ENCODE measurements at regions of chrX and their contacts with region 1.

Region 1: DNA sequence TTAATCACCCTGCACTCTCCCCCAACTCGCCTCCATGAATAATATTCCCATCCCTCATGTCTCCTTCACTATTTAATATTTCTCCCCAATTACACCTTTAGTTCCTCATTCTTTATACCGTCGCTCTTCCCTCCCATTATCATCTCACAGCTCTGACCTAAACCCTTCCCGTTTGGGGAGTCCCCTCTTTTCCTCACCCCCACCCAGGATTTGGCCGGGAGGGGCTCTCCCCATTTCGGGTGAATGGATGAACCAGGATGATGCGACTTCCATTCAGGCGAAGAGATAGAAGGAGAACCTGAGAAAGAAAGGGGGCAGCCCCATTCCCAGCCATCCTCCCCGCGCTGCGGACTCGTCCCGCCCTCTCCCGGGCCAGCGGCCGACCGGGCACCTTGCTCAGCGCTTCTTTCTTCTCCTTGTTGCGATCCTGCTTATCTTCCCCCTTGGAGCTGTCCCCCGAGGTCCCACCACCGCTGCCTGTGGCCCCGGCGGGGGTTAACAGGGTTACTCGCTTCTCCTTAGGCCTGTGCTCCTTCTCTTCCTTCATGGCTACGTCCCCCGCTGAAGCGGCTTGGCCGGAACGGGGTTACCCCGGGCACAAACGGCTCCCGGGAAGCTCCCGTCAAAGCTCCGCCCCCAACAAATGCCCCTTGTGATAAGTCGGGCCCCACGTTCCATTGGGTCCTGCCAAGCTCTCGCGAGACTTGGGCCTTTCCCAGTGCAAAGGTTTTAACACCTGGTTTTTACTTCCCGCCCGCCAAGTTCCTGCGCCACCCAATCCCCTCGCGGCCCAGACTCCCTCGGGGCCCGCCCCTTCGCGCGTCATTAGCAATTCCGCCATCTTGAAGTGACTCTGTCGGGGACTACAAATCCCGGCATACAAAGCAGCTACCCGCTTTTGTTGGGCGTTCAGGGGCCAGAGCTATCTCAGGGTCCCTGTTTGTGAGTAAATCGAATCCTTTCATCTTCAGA is at the start of gene UPF3B:
- DNase-seq: peak; percentile 94 to 97 (median 96)
- ATAC-seq: peak; percentile 98 to 99 (median 99)
- H3K4me3 ChIP-seq: peak within 1 kb of the TSS; percentile 15 to 93 (median 74)
- H3K27ac ChIP-seq: peak within 1 kb of the TSS; percentile 68 to 93 (median 86)
- H3K4me1 ChIP-seq: peaks cover 0 to 6% (median 0%) of the 10 kb centered on the region in 12 donors
- H3K27me3 ChIP-seq: peaks cover 0 to 7% (median 0%) of the 10 kb centered on the region in 9 donors
- CTCF ChIP-seq: peak in 1 of 12 donors; percentile 6
- POLR2A ChIP-seq: peak in 1 of 2 donors; percentile 55
- total RNA-seq, gene UPF3B: 0.71 to 4.3 (median 2.8) TPM

Region 2: GRCh38 chrX:118325453-118325852 is 1527.2 kb before region 1 on chrX:
- intact Hi-C with region 1: no loop called
- DNase-seq: no peak
- ATAC-seq: no peak
- H3K4me3 ChIP-seq: no peak overlapping the region
- H3K27ac ChIP-seq: no peak overlapping the region
- H3K4me1 ChIP-seq: no peaks in the 10 kb centered on the region
- H3K27me3 ChIP-seq: peaks cover 0 to 5% (median 0%) of the 10 kb centered on the region in 9 donors
- CTCF ChIP-seq: peak in 3 of 12 donors; percentile 15 to 27 (median 17)
- POLR2A ChIP-seq: no peak

Region 3: GRCh38 chrX:118855681-118856310 is 996.9 kb before region 1 on chrX:
- intact Hi-C with region 1: loop called in 1 of 10 experiments (anchors 5 kb)
- DNase-seq: no peak
- ATAC-seq: no peak
- H3K4me3 ChIP-seq: no peak overlapping the region
- H3K27ac ChIP-seq: no peak overlapping the region
- H3K4me1 ChIP-seq: no peaks in the 10 kb centered on the region
- H3K27me3 ChIP-seq: peaks cover 0 to 5% (median 0%) of the 10 kb centered on the region in 9 donors
- CTCF ChIP-seq: no peak
- POLR2A ChIP-seq: no peak

Region 4: DNA sequence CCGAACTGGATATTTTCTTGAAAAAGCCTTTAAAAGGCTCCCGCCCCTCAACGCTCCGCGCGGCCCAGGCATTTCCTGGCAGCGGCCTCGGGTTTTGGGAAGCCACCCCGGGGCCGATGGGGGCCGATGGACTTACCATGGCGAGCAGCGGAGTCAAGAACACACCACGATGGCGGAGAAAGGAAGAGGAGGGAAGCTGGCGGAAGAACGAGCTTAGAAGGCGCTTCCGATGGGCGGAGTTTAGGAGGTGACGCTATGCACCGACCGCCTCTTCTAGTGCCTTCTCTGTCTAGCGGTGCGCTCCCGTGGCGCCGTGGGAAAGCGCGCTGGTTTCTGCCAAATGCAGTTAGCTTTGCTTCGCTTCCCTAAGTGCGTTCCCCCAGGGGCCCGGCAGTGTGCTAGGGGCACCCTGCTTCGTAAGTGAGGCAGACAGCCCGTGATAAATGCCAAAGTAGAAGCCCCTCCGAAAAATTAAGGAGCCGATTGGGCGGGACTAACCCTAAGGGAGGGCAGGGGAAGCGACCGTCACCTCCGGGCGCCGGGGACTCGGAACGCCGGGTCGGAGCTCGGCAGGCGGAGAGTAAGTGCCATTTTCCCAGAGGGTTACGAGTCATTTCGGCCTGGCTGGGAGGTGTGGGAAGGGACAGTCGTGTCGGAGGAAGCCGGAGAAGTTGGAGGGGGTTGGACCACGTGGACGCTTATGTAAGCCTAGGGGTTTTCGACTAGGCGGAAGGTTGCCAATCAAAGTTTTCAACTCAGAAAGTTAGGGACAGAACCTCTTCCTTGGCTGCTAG is 61.0 kb before region 1 on chrX and contains the start of gene RPL39:
- intact Hi-C with region 1: loop called in 4 of 10 experiments (anchors 5 to 10 kb)
- DNase-seq: peak; percentile 84 to 90 (median 87)
- ATAC-seq: peak; percentile 97 to 98 (median 97)
- H3K4me3 ChIP-seq: peak within 1 kb of the TSS; percentile 54 to 97 (median 74)
- H3K27ac ChIP-seq: peak within 1 kb of the TSS; percentile 85 to 99 (median 94)
- H3K4me1 ChIP-seq: peaks cover 0 to 45% (median 16%) of the 10 kb centered on the region in 12 donors
- H3K27me3 ChIP-seq: no peaks in the 10 kb centered on the region
- CTCF ChIP-seq: no peak
- POLR2A ChIP-seq: peak in 1 of 2 donors; percentile 45
- total RNA-seq, gene RPL39: 933 to 1,886 (median 1,201) TPM

Region 5: DNA sequence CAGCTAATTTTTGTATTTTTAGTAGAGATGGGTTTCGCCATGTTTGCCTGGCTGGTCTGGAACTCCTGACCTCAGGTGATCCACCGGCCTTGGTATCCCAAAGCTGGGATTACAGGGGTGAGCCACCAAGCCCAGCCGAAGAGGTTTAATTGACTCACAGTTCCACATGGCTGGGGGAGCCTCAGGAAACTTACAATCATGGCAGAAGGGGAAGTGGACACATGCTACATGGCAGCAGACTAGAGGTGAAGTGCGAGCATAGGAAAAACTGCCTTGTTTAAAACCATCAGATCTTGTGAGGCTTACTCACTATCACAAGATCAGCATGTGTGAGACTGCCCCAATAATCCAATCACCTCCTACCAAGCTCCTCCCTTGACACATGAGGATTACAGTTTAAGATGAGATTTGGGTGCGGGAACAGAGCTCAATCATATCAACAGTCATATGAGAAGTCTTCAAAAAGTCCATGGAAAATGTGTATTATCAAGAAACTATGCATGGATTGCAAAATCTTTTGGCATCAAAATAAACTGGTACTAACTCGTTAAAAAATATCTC is 35.5 kb before region 1 on chrX:
- intact Hi-C with region 1: no loop called
- DNase-seq: no peak
- ATAC-seq: no peak
- H3K4me3 ChIP-seq: no peak overlapping the region
- H3K27ac ChIP-seq: no peak overlapping the region
- H3K4me1 ChIP-seq: no peaks in the 10 kb centered on the region
- H3K27me3 ChIP-seq: peaks cover 0 to 2% (median 0%) of the 10 kb centered on the region in 9 donors
- CTCF ChIP-seq: no peak
- POLR2A ChIP-seq: no peak

Region 6: GRCh38 chrX:119871599-119872395 is 19.1 kb after region 1 on chrX and contains the starts of genes NDUFA1 and RNF113A:
- intact Hi-C with region 1: loop called in 1 of 10 experiments (anchors 1 kb)
- DNase-seq: peak; percentile 82 to 90 (median 88)
- ATAC-seq: peak; percentile 97 to 98 (median 98)
- H3K4me3 ChIP-seq: peak within 1 kb of the TSS; percentile 41 to 97 (median 74)
- H3K27ac ChIP-seq: peak within 1 kb of the TSS; percentile 88 to 99 (median 92)
- H3K4me1 ChIP-seq: peaks cover 0 to 26% (median 3%) of the 10 kb centered on the region in 12 donors
- H3K27me3 ChIP-seq: no peaks in the 10 kb centered on the region
- CTCF ChIP-seq: no peak
- POLR2A ChIP-seq: peak in 1 of 2 donors; percentile 41
- total RNA-seq, gene NDUFA1: 288 to 622 (median 433) TPM
- total RNA-seq, gene RNF113A: 8.0 to 12.8 (median 9.6) TPM

Region 7: GRCh38 chrX:120522820-120523219 is 670.2 kb after region 1 on chrX:
- intact Hi-C with region 1: no loop called
- DNase-seq: no peak
- ATAC-seq: no peak
- H3K4me3 ChIP-seq: no peak overlapping the region
- H3K27ac ChIP-seq: no peak overlapping the region
- H3K4me1 ChIP-seq: no peaks in the 10 kb centered on the region
- H3K27me3 ChIP-seq: no peaks in the 10 kb centered on the region
- CTCF ChIP-seq: no peak
- POLR2A ChIP-seq: no peak